ENCODE measurements at regions of chr5 and their contacts with region 1.

Region 1: GRCh38 chr5:178075840-178076548 is 37.3 kb upstream of the N4BP3 start:
- DNase-seq: peak; percentile 88
- H3K4me3 Mint-ChIP-seq: no peak overlapping the region
- H3K27ac Mint-ChIP-seq: no peak overlapping the region
- H3K4me1 Mint-ChIP-seq: peaks cover 3% of the 10 kb centered on the region
- H3K27me3 Mint-ChIP-seq: no peaks in the 10 kb centered on the region

Region 2: DNA sequence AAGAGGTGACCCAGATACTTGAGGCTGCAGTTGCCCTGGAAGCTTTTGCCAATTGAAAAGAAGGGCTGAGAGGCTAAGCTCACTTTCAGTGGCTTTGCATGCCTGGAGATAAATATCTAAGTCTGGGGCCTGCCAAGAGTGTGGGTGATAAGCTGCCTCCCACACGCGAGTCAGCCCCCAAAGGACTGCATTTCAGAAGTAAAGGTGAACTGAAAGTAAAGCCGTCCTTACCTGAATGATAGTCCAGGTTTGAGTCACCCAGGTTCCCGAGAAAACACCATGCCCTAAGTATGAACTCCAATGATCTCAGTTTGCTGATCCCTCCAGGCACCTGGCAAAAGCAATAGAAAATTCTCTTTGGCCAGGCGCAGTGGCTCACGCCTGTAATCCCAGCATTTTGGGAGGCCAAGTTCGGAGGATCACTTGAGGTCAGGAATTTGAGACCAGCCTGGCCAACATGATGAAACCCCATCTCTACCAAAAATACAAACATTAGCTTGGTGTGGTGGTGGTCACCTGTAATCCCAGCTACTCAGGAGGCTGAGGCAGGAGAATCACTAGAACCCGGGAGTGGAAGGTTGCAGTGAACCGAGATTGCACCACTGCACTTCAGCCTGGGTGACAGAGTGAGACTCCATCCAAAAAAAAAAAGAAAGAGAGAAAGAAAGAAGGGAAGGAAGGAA is 15.0 kb after region 1 on chr5:
- CTCF ChIA-PET with region 1: interaction called, 36 read pairs
- intact Hi-C with region 1: no loop called
- DNase-seq: no peak
- H3K4me3 Mint-ChIP-seq: no peak overlapping the region
- H3K27ac Mint-ChIP-seq: no peak overlapping the region
- H3K4me1 Mint-ChIP-seq: peaks cover 17% of the 10 kb centered on the region
- H3K27me3 Mint-ChIP-seq: peaks cover 2% of the 10 kb centered on the region

Region 3: GRCh38 chr5:178120868-178121357 is 44.9 kb after region 1 on chr5:
- CTCF ChIA-PET with region 1: interaction called, 28 read pairs
- intact Hi-C with region 1: no loop called
- DNase-seq: peak; percentile 90
- H3K4me3 Mint-ChIP-seq: no peak overlapping the region
- H3K27ac Mint-ChIP-seq: no peak overlapping the region
- H3K4me1 Mint-ChIP-seq: peaks cover 20% of the 10 kb centered on the region
- H3K27me3 Mint-ChIP-seq: no peaks in the 10 kb centered on the region

Region 4: GRCh38 chr5:178153573-178154343 is 77.8 kb after region 1 on chr5 and contains the start of gene NHP2:
- CTCF ChIA-PET with region 1: interaction called, 76 read pairs
- intact Hi-C with region 1: no loop called
- DNase-seq: peak; percentile 99
- H3K4me3 Mint-ChIP-seq: peak within 1 kb of the TSS; percentile 96
- H3K27ac Mint-ChIP-seq: peak within 1 kb of the TSS; percentile 81
- H3K4me1 Mint-ChIP-seq: peaks cover 45% of the 10 kb centered on the region
- H3K27me3 Mint-ChIP-seq: no peaks in the 10 kb centered on the region
- total RNA-seq, gene NHP2: 289 to 298 TPM

Region 5: GRCh38 chr5:178170995-178171394 is 95.0 kb after region 1 on chr5:
- CTCF ChIA-PET with region 1: interaction called, 32 read pairs
- intact Hi-C with region 1: no loop called
- DNase-seq: no peak
- H3K4me3 Mint-ChIP-seq: no peak overlapping the region
- H3K27ac Mint-ChIP-seq: no peak overlapping the region
- H3K4me1 Mint-ChIP-seq: no peaks in the 10 kb centered on the region
- H3K27me3 Mint-ChIP-seq: no peaks in the 10 kb centered on the region

Region 6: GRCh38 chr5:178372142-178372571 is 296.2 kb after region 1 on chr5:
- CTCF ChIA-PET with region 1: no interaction called
- intact Hi-C with region 1: no loop called
- DNase-seq: no peak
- H3K4me3 Mint-ChIP-seq: no peak overlapping the region
- H3K27ac Mint-ChIP-seq: no peak overlapping the region
- H3K4me1 Mint-ChIP-seq: no peaks in the 10 kb centered on the region
- H3K27me3 Mint-ChIP-seq: no peaks in the 10 kb centered on the region

Measured in activated naive CD4-positive, alpha-beta T cell treated with anti-CD3 and anti-CD28 coated beads for 36 hours (primary cell).